K562 (cell line): ENCODE measurements at regions of chr16 and their contacts with region 1.

Region 1: GRCh38 chr16:67296422-67296821 is 17.1 kb downstream of the PLEKHG4 start:
- DNase-seq: no peak
- ATAC-seq: no peak
- H3K4me3 ChIP-seq: no peak overlapping the region
- H3K27ac ChIP-seq: no peak overlapping the region
- H3K4me1 ChIP-seq: 0 out of 5 replicates have a peak, but pooled peaks cover 0 to 3% of the 10 kb centered on the region in 2 experiments
- H3K27me3 ChIP-seq: peaks cover 23 to 37% of the 10 kb centered on the region in 2 experiments
- CTCF ChIP-seq: no peak
- EP300 ChIP-seq: no peak
- POLR2A ChIP-seq: no peak
- RAD21 ChIP-seq: no peak

Region 2: GRCh38 chr16:67284699-67285646 is 11.4 kb before region 1 on chr16:
- CTCF ChIA-PET with region 1: no interaction called
- POLR2A ChIA-PET with region 1: interaction called, 10 read pairs
- in situ Hi-C with region 1: no loop called
- intact Hi-C with region 1: no loop called
- DNase-seq: peak; percentile 23 to 39 (median 26)
- ATAC-seq: peak; percentile 67
- H3K4me3 ChIP-seq: no peak overlapping the region
- H3K27ac ChIP-seq: no peak overlapping the region
- H3K4me1 ChIP-seq: peaks cover 4 to 25% of the 10 kb centered on the region in 2 experiments; a peak in 3 of 5 replicates
- H3K27me3 ChIP-seq: no peaks in the 10 kb centered on the region
- CTCF ChIP-seq: peak; percentile 18 to 55 (median 39); a peak in 4 of 6 replicates
- EP300 ChIP-seq: no peak
- POLR2A ChIP-seq: no peak
- RAD21 ChIP-seq: peak in 1 of 2 experiments; percentile 23; a peak in 1 of 4 replicates

Region 3: DNA sequence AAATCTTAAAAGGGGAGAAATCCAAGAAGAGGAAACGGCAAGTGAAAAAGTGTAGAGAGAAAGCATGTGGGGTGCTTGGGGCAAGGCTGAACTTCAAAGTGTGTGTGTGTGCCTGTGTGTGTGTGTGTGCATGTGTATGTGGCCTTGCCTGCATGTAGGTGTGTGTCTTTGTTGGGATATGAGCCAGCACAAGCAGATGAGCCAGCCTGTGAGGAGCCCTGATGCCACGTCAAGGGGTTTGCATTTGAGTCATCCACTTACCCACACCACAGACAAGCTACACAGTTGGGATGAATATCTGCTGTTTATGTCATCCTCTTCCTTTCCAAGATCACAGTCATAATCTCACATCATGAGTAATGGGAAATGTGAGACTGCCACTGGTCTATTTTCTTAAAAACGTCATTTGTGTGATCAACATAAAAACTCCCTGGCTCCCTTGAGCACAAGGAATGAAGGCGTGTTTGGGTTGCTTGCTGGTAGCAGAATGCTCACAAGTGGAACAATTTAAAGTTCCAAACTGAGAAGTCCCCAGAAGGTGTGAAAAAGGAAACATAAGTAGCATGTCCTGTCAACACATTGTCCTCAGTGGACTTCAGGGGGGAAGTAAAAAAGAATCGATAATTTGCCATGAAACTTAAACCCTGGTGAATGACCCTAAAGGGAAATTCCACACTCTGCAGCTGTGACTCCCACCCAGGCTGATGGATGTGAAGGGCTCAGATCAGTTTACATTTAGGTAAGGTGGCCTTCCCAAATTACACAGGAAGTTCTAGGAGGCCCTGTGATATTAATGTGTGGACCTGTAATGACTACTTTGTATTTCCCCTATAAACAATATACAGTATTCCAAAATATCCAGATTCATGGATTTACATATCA is 15.4 kb after region 1 on chr16:
- CTCF ChIA-PET with region 1: no interaction called
- POLR2A ChIA-PET with region 1: no interaction called
- in situ Hi-C with region 1: no loop called
- intact Hi-C with region 1: no loop called
- DNase-seq: peak in 3 of 4 experiments; percentile 17 to 47 (median 18)
- ATAC-seq: peak; percentile 42; the same call in 1 of the 3 replicates
- H3K4me3 ChIP-seq: no peak overlapping the region
- H3K27ac ChIP-seq: no peak overlapping the region
- H3K4me1 ChIP-seq: peaks cover 0 to 19% of the 10 kb centered on the region in 2 experiments; a peak in 4 of 5 replicates
- H3K27me3 ChIP-seq: peaks cover 0 to 7% of the 10 kb centered on the region in 2 experiments; a peak in 1 of 5 replicates
- CTCF ChIP-seq: no peak
- EP300 ChIP-seq: no peak
- POLR2A ChIP-seq: no peak
- RAD21 ChIP-seq: no peak